OCI-LY7 (cell line): ENCODE measurements at regions of chr2 and their contacts with region 1.

Region 1: GRCh38 chr2:128178650-128179460 is 87.9 kb downstream of the UGGT1 start:
- DNase-seq: peak; percentile 42
- H3K4me3 ChIP-seq: no peak overlapping the region
- H3K27ac ChIP-seq: no peak overlapping the region
- H3K4me1 ChIP-seq: no peaks in the 10 kb centered on the region
- CTCF ChIP-seq: peak; percentile 87

Region 2: GRCh38 chr2:127683757-127684156 is 495.1 kb before region 1 on chr2:
- CTCF ChIA-PET with region 1: no interaction called
- POLR2A ChIA-PET with region 1: no interaction called
- intact Hi-C with region 1: no loop called
- DNase-seq: no peak
- H3K4me3 ChIP-seq: no peak overlapping the region
- H3K27ac ChIP-seq: no peak overlapping the region
- H3K4me1 ChIP-seq: no peaks in the 10 kb centered on the region
- CTCF ChIP-seq: no peak

Region 3: DNA sequence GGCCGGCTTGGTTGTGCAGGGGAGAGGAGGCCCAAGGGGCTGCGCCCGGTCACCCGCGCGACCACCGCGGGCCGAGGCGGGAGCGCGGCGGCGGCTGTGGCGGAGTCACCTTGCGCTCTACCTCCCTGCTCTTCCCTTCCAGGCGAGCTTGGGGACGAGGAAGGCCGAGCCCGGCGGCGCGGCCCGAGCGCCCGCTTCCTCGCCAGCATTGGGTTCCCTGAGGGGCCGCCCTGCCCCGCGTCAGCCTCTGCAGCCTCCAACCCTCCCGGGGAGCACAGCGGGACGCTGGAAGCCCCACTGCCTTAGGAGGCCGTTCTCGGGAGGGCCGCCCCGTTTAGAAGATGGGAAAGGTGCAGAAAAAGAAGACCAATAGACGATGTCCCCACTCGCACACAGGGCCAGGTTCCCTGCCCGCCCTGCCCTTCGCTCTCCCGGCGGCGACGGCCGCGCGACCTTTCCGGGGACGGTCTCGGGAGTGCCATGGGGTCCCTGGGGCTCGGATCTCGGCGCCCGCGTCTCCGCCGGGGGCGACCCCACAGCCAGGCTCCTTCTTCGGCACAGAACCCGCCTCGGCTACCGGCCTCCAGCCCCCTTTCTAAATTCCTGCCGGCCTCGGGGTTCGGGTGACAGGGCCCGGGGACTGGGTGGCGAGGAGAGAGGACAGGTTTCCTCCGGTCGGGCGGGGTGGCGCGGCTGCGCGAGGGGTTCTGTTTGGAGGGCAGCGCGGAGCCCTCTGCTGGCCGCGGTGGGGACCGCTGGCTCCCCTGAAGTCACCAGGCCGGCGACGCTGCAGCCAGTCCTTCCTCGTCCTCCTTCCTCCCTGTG is 54.3 kb after region 1 on chr2:
- CTCF ChIA-PET with region 1: no interaction called
- POLR2A ChIA-PET with region 1: interaction called, 3 read pairs
- intact Hi-C with region 1: loop called (anchors 1 kb)
- DNase-seq: peak; percentile 76
- H3K4me3 ChIP-seq: peak overlapping the region; percentile 67
- H3K27ac ChIP-seq: no peak overlapping the region
- H3K4me1 ChIP-seq: peaks cover 6% of the 10 kb centered on the region
- CTCF ChIP-seq: peak; percentile 89